BJ (cell line): ENCODE measurements at regions of chr6 and their contacts with region 1.

Region 1: GRCh38 chr6:14824484-14825275 is 421.2 kb upstream of the JARID2 start:
- DNase-seq: no peak
- H3K4me3 ChIP-seq: no peak overlapping the region
- H3K27me3 ChIP-seq: no peaks in the 10 kb centered on the region
- CTCF ChIP-seq: no peak

Region 2: DNA sequence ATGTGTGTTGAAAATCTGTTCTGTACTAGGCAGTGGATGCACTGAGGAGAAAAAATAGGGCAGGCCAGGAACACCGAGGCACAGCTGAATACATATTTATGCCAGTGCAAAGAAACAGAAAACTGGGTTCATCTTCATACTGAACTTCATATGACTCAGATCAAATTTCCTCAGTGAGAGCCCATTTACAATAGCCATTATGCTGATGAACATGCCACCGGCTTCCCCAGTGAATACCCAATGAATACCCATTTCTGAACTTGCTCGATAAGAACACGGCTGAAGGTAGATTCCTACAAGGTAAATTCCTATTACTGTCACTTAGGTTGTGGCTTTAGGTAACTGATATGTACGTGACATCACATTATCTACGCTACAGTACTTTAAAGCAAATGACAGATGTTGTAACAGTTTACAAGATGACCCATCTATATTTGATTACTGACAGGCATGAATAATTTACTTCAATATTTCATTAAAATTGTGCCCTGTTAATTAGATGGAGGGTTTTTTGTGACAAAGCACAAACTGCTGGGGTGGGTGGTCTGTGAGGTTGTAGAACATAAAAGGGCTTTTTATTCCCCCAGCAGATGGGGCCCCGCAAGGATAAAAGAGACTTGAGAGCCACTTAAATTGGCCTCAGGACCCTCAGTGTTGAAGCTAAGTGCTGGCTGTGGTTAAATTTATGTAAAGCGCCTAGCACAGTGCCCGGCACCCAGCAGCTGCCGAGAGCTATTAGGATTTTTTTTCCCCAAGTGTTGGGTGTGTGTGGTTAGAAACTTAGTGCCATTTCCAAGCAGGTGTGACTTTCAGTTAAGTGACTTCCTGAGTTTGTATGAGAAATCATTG is 442.6 kb before region 1 on chr6:
- CTCF ChIA-PET with region 1: no interaction called
- POLR2A ChIA-PET with region 1: no interaction called
- DNase-seq: no peak
- H3K4me3 ChIP-seq: no peak overlapping the region
- H3K27me3 ChIP-seq: no peaks in the 10 kb centered on the region; the same call in 1 of the 2 replicates
- CTCF ChIP-seq: no peak

Region 3: GRCh38 chr6:14721103-14721746 is 103.5 kb before region 1 on chr6:
- CTCF ChIA-PET with region 1: no interaction called
- POLR2A ChIA-PET with region 1: no interaction called
- DNase-seq: no peak
- H3K4me3 ChIP-seq: no peak overlapping the region
- H3K27me3 ChIP-seq: no peaks in the 10 kb centered on the region
- CTCF ChIP-seq: no peak

Region 4: DNA sequence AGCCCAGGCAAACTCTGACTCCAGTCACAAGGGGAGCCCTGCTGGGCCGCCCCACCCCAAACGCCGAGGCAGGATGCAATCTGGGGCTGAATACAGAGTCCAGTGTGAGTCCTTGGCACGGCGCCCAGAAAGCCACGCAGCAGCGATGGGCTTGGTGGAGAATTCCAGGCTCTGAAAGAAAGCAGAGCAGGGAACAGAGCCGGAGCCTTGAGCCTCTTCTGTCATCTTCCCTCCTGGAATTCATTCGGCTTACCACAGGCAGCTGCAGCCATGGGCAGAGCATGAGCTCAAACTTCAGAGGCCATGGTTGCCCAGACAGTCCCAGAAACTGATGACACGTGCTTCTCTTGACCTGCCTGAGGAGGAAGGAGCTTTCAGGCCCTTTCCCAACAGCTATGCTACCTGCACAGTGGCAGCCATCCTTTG is 19.9 kb before region 1 on chr6:
- CTCF ChIA-PET with region 1: no interaction called
- POLR2A ChIA-PET with region 1: no interaction called
- DNase-seq: peak; percentile 51
- H3K4me3 ChIP-seq: no peak overlapping the region
- H3K27me3 ChIP-seq: no peaks in the 10 kb centered on the region
- CTCF ChIP-seq: no peak

Region 5: DNA sequence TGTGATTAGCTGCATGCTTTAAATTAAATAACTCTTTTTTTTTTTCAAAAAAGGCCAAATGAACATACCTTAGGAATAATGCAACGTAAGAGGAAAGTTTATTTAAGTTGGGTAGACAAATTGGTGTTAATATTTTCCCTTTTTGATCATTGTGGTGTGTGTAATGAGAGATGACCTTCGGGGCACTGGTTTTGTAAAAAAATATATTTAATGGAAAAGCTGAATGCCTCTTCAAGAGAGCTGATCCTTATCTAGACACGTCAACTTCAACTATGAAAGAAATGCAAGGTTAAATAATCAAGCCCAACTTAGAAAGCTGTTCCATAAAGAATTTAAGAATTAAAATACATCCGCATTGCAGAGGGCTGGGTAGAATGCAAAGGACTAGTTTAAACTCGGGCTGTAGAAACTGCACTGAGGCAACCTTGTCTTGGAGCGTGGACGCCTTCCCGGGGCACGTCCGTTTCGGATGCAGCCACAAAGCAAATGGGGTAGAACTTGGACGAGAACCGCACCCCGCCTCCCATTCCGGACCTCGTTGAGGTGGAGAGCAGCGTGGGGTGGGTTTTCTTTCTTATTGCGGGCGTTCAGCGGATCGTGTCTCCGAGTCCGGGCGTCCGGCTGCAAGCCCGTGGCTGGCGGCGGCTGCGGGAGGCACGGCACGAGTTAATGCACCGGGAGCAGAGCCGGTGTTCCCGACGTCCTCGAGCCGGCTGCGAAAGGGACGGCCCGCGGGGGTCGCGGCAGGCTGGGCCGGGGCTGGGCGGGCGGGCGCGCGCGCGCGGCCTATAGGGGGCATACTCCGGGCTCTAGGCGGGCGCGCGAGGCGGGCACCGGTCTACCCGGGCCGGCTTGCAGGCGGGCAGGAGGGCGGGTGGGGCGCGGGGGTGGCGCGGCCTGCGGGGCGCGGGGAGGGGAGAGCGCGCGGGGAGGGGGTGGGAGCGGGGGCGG is 423.1 kb after region 1 on chr6:
- CTCF ChIA-PET with region 1: no interaction called
- POLR2A ChIA-PET with region 1: interaction called, 10 read pairs
- DNase-seq: no peak
- H3K4me3 ChIP-seq: peak overlapping the region; percentile 92
- H3K27me3 ChIP-seq: no peaks in the 10 kb centered on the region
- CTCF ChIP-seq: no peak